Activated T-helper 1 cell treated with anti-CD3 and anti-CD28 coated beads, Interleukin-12 subunit alpha, Interleukin-12 subunit beta, Interleukin-2, Interleukin-4 antibody, amounts not matched to agents 30 ng/mL and 10 ng/mL and 1 ng/mL, durations not matched to agents 14 hours and 24 hours and 36 hours (primary cell): ENCODE measurements at regions of chr2 and their contacts with region 1.

Region 1: DNA sequence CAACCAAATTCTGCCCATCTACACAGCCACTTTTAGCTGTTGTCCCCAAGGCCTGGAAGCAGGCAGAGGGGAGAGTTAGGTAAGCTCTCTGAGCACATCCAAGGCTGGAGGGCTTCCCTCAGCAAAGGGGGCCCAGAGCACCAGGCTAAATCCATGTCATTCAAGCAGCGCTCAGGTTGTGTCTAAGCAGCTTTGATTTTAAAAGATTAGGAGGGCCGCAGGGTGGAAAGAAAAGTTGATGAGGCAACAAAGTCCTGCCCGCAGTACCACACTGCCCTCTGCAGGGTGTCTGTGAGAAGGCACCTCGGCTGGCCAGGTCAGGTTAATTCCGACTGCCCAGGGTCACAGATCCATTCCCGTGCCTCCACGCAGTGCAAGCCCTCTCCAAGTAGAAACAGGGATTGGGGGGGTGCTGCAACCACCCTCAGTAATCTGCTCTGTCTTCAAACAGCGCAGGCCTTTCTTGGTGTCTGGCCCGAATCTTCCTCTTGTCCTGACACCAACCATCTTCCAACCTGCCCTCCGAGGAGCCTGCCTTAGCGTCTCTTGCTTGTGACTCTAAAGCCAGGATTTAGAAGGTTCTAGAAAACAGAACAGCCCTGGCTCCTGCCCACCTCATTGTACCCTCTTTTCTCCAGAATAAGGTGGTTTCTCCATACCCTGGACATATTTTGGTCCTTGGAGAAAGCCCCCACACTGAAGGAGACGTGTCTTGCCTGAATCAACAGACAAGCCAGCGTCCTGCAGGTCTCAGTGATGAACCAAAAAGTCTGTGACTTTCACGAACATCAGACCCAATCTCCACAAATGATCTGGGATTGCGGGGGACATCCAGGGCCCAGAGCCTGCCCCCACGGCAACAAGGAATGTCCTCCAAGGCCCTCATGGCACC is 289.2 kb downstream of the TNS1 start:
- DNase-seq: peak; percentile 48
- H3K4me3 Mint-ChIP-seq: no peak overlapping the region
- H3K27ac Mint-ChIP-seq: no peak overlapping the region
- H3K4me1 Mint-ChIP-seq: no peaks in the 10 kb centered on the region
- H3K27me3 Mint-ChIP-seq: no peaks in the 10 kb centered on the region

Region 2: DNA sequence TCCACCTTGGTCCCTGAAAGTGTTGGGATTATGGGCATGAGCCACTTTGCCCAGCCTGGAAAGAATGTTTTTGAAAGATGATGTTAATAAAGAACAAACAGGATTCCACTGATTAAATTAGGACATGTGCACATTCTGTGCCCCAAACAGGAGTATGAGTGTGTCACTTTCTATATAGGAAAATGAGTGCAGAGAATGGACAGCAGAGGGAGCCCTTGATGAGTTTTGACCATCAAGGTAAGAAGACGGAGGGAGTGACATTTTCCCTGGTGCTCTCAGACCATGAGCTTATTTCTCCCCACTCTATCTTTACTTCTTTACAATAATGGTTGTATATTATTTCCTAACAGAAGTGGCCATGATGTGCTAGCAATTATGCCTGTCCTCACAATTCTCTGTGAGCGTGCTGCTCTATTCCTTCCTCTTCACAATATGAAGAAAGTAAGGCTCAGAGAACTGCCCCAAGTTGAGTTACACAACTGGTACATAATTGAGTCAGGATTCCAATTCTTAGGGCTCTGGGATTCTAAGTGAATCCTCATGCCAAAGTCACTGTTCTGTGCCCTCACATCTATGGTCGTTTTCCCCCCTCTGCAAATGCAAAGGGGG is 1194.4 kb before region 1 on chr2:
- intact Hi-C with region 1: loop called (anchors 5 kb)
- DNase-seq: peak; percentile 39
- H3K4me3 Mint-ChIP-seq: no peak overlapping the region
- H3K27ac Mint-ChIP-seq: no peak overlapping the region
- H3K4me1 Mint-ChIP-seq: no peaks in the 10 kb centered on the region
- H3K27me3 Mint-ChIP-seq: no peaks in the 10 kb centered on the region

Region 3: DNA sequence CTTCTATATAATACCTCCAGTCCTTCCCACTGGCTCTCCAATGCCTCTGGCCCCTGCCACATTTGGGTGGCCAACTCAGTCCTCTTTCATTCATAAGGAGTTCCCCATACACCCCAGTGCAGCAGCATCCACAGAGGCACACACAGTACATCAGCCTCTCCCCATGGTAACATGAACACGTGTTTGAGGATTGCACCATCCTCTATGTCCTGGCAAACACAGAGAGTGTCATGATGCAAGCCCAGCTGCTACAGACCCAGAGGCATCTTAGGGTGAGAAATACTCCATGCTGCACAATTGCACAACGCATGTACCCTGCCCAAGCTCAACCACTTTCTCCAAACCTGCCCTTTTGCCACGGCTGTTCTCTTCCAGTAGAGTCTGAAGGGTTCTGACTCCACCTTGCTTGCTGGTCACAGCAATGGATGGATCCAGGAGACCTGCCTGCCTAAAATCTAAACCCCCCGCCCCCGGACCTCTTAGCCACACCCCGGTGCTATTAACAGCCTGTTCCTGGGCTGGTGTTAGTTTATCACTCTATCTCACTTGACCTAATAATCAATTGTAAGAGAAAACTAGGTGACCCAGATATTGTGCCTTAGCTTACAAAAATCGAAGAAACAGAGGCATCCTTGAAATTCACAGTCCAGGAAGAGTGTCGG is 1029.7 kb before region 1 on chr2:
- intact Hi-C with region 1: loop called (anchors 1 kb)
- DNase-seq: no peak
- H3K4me3 Mint-ChIP-seq: no peak overlapping the region
- H3K27ac Mint-ChIP-seq: no peak overlapping the region
- H3K4me1 Mint-ChIP-seq: peaks cover 10% of the 10 kb centered on the region
- H3K27me3 Mint-ChIP-seq: peaks cover 15% of the 10 kb centered on the region

Region 4: DNA sequence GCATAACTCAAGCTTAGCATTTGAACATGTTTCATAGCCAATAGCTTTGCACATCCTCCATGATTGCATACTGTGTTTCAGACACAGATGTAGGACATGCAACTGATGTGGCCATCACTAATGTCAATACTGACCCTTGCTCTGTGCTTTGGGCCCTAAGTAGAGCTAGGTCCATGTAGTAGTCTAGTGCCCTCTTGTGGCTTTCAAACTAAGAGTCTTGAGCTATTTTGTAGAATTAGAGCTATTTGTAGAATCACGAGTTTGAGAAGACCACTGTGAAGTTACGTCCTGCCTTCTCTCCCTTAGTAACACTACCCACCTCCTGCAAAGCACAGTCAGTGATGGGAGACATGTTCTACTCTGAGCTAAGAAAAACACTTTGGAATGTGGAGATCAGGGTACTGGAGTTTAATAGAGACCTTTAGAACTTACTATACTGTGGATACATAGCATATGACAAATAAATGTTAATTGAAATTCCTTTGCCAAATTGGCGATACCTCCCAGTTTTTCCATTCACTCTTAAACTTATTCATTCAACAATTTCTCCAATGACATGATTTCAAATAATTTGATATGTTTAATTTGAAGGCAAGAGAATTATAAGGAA is 547.3 kb before region 1 on chr2:
- intact Hi-C with region 1: loop called (anchors 1 kb)
- DNase-seq: no peak
- H3K4me3 Mint-ChIP-seq: no peak overlapping the region
- H3K27ac Mint-ChIP-seq: no peak overlapping the region
- H3K4me1 Mint-ChIP-seq: peaks cover 17% of the 10 kb centered on the region
- H3K27me3 Mint-ChIP-seq: peaks cover 2% of the 10 kb centered on the region

Region 5: GRCh38 chr2:217559084-217559483 is 154.6 kb before region 1 on chr2:
- intact Hi-C with region 1: no loop called
- DNase-seq: no peak
- H3K4me3 Mint-ChIP-seq: no peak overlapping the region
- H3K27ac Mint-ChIP-seq: no peak overlapping the region
- H3K4me1 Mint-ChIP-seq: no peaks in the 10 kb centered on the region
- H3K27me3 Mint-ChIP-seq: peaks cover 2% of the 10 kb centered on the region

Region 6: GRCh38 chr2:217650716-217651360 is 62.8 kb before region 1 on chr2:
- intact Hi-C with region 1: loop called (anchors 1 kb)
- DNase-seq: peak; percentile 12
- H3K4me3 Mint-ChIP-seq: no peak overlapping the region
- H3K27ac Mint-ChIP-seq: no peak overlapping the region
- H3K4me1 Mint-ChIP-seq: no peaks in the 10 kb centered on the region
- H3K27me3 Mint-ChIP-seq: peaks cover 4% of the 10 kb centered on the region

Region 7: DNA sequence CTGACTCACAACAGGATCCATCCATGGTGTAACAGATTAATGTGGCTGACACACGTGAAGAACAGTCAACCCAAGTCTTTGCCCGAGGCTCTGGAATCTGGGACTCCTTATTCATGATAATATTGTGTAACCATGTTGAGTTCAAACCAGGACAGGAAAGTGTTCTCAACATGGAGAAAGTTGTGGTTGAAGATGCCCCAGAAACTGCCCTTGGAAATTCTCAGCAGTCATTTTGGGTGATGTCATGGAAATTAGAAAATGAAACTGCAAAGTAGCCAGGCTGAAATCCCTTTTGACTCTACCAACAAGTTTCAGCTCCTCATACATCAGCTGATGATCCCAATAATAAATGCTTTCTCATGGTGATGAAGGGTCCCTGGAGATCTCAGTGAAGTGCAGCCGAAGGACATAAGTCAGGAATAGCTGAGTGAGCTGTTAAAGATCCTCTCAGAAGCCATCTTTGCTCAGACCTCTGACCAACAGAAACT is 18.6 kb before region 1 on chr2:
- intact Hi-C with region 1: no loop called
- DNase-seq: no peak
- H3K4me3 Mint-ChIP-seq: no peak overlapping the region
- H3K27ac Mint-ChIP-seq: no peak overlapping the region
- H3K4me1 Mint-ChIP-seq: peaks cover 5% of the 10 kb centered on the region
- H3K27me3 Mint-ChIP-seq: peaks cover 4% of the 10 kb centered on the region

Region 8: DNA sequence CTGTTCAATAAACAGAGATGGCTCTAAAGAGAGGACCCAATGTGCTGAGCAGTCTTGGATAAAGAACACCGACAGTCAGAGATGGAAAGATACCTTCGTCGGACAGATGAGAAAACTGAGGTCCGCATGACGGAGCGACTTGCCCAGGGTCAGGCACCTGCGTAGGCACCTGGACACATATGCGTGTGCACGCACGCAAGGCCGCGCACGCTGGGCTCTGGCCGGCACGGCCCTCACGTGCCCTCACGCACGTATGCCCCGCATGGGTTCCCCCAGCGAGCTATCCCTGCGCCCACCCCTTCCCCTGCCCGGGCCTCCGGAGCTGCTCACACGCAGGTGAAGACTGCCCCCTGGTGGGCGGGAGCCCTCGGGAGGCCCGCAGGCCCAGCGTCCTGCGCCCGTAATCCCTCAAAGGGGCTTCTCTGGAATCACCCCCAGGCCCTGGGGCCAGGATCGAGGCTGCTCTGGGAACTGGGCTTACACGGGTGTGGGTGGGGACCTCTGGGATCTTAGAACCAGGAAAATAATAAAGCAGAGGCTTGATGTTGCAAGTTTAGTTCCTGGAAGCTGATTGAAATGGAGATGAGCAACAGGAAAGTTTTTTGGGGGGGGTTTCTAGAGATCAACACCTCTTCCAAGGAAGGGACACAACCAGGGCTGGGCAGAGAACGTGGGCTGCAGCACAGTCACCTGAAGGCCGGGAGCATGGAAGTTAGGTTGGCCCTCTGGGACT is 42.9 kb after region 1 on chr2:
- intact Hi-C with region 1: no loop called
- DNase-seq: peak; percentile 39
- H3K4me3 Mint-ChIP-seq: no peak overlapping the region
- H3K27ac Mint-ChIP-seq: peak overlapping the region; percentile 63
- H3K4me1 Mint-ChIP-seq: peaks cover 21% of the 10 kb centered on the region
- H3K27me3 Mint-ChIP-seq: peaks cover 2% of the 10 kb centered on the region

Region 9: DNA sequence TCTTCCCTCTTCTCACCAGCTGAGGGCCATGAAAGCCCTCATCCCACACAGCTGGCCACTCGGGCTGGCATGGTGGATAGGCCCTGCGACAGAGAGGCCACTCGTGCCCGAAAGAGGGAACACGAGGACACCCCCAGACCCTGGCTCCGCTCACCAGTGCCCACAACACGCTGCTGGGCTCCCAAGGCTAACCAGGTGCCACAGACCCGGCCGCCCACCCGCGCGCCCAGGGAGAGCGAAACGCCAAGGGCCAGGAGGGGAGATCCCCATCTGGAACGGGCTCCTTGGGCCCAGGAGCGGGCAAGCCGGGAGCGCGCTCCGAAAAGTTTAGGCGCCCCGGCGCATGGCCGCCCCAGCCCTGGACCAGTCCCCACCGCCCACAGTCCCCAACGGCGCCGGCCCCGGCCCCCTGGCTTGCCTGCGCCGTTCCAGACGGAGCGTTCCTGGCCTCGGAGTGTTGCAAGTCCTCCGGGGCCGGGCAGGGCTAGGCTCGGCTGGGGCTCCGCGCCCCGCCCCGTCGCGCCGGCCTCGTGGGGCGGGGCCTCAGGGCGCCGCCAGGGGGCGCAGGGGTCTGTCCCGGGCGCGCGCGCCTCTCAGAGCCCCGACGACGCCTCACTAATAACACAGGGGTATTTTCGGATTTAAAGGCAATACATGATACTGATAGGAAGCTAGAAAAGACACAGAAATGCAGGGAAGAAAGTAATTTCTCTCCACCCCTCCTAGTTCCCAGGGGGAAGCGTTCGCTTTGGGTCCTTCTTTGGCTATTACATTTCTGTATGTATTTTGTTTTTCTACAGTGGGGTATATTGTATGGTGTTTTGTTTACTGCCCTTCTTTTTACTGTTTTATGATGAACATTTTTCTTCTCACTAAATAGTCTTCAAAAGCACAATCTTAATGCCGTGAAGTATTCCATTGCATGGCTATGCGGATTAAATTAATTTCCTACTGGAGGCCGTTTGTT is 578.7 kb after region 1 on chr2 and contains the start of gene TMBIM1:
- intact Hi-C with region 1: no loop called
- DNase-seq: peak; percentile 79
- H3K4me3 Mint-ChIP-seq: peak within 1 kb of the TSS; percentile 88
- H3K27ac Mint-ChIP-seq: peak within 1 kb of the TSS; percentile 94
- H3K4me1 Mint-ChIP-seq: peaks cover 57% of the 10 kb centered on the region
- H3K27me3 Mint-ChIP-seq: no peaks in the 10 kb centered on the region
- total RNA-seq, gene TMBIM1: 66.2 and 70.5 TPM in 2 replicates